A549 (cell line): ENCODE measurements at regions of chr12 and their contacts with region 1.

Region 1: DNA sequence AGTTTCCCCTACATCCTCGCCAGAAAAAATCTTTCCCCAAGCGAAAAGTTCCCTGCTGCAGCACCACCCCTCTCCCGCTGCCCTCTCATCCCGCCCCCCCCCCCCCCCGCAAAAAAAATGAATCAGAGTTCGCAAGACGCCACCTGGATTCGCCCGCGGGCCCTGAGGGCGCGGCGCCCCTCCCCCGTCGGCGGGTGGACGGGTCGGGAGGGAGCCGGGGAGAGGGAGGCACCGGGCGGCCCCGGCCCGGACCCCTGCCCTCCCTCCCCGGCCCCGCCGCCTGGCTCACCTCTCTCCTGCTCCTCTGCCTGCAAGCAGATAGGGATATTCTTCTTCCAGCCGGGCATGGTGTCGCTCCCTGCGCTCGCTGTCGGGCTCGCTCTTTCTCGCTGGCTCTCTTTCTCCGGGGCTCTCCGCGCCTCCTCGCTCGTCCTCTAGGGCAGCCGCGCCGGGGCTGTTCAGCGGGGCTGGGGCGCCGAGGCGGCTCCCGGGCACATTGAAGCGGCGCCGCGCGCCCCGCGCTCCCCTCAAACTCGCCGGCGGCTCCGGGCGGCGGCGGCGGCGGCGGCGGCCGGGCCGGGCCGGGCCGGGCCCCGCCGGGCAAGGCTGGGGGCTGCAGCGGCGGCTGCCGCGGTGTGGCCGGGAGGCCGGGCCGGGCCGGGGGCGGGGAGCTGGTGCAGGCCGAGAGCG is 200.3 kb upstream of the CAND1 start:
- DNase-seq: peak; percentile 37 to 67
- ATAC-seq: peak; percentile 80 to 81
- H3K4me3 ChIP-seq: peak overlapping the region; percentile 75
- H3K27ac ChIP-seq: peak overlapping the region; percentile 89 to 91
- H3K4me1 ChIP-seq: peaks cover 13% of the 10 kb centered on the region
- CTCF ChIP-seq: no peak
- EP300 ChIP-seq: no peak
- POLR2A ChIP-seq: peak; percentile 45
- RAD21 ChIP-seq: no peak

Region 2: DNA sequence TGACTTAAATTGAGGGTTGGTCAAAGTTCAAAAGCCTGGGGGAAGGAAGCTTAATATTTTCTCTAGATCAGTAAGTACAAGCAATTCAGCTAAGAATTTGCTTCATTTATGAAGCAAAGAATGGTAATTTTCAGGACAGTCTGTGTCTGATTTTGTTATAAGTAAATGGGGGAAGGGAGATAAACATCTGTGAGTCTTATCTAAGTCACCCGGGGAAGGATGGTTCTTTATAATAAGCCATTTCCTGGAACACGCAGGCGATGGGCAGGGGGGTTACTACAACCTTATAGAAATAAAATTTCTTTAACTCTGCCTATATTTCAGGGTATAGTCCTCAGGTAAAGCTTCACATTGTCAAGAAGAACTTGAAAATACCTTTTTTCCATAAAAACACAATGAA is 723.7 kb before region 1 on chr12:
- CTCF ChIA-PET with region 1: no interaction called
- POLR2A ChIA-PET with region 1: interaction called, 13 read pairs
- DNase-seq: no peak
- ATAC-seq: no peak
- H3K4me3 ChIP-seq: no peak overlapping the region
- H3K27ac ChIP-seq: no peak overlapping the region
- H3K4me1 ChIP-seq: no peaks in the 10 kb centered on the region
- CTCF ChIP-seq: no peak
- EP300 ChIP-seq: no peak
- POLR2A ChIP-seq: no peak
- RAD21 ChIP-seq: no peak

Region 3: DNA sequence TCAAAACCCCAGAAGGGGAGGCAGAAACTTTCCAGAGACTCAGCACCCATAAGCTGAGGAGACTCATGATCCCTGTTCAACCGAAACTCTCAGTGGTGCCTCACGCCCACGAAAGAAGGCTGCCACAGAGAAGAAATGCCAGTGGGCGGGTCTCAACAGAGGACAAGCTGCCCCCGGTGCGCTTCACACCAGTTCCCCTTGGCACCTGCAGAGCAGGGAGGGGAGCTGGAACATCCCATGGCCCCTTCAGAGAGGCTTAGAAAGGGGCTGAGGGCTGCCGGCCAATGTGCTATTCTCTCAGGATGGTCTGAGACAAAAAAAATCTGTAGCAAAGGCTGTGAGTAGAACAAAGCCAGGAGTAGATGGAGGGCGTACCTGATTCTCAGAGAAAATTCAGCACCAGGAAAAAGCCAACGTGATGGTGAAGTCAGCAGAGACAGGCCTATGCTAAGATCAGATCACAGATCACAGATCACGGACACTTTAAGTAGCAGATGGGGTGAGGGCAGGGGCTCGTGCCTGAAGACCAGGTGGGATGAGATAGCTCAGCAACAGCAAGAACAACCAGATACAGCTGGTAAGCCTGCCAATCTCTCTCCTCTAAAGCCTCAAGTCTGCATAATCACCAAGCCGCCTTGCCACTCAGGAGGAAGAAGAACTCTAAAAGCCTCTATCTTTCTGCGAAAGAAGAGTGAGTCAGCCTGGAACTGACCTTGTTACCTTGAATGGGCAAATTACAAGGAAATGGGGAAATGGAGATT is 183.6 kb before region 1 on chr12:
- CTCF ChIA-PET with region 1: no interaction called
- POLR2A ChIA-PET with region 1: no interaction called
- DNase-seq: no peak
- ATAC-seq: no peak
- H3K4me3 ChIP-seq: no peak overlapping the region
- H3K27ac ChIP-seq: no peak overlapping the region
- H3K4me1 ChIP-seq: no peaks in the 10 kb centered on the region
- CTCF ChIP-seq: no peak
- EP300 ChIP-seq: no peak
- POLR2A ChIP-seq: no peak
- RAD21 ChIP-seq: no peak